CD8-positive, alpha-beta memory T cell (primary cell): ENCODE measurements at regions of chr9 and their contacts with region 1.

Region 1: GRCh38 chr9:104863180-104863883 is 64.6 kb downstream of the ABCA1 start:
- DNase-seq: peak; percentile 5 to 58 (median 36)
- H3K4me3 ChIP-seq: no peak overlapping the region
- H3K4me3 Mint-ChIP-seq: no peak overlapping the region
- H3K27ac ChIP-seq: no peak overlapping the region
- H3K27ac Mint-ChIP-seq: peak overlapping the region in 1 of 8 donors; percentile 0
- H3K4me1 ChIP-seq: peaks cover 5% of the 10 kb centered on the region
- H3K4me1 Mint-ChIP-seq: no peaks in the 10 kb centered on the region
- H3K27me3 ChIP-seq: no peaks in the 10 kb centered on the region
- H3K27me3 Mint-ChIP-seq: peaks cover 2 to 11% of the 10 kb centered on the region in 2 donors

Region 2: DNA sequence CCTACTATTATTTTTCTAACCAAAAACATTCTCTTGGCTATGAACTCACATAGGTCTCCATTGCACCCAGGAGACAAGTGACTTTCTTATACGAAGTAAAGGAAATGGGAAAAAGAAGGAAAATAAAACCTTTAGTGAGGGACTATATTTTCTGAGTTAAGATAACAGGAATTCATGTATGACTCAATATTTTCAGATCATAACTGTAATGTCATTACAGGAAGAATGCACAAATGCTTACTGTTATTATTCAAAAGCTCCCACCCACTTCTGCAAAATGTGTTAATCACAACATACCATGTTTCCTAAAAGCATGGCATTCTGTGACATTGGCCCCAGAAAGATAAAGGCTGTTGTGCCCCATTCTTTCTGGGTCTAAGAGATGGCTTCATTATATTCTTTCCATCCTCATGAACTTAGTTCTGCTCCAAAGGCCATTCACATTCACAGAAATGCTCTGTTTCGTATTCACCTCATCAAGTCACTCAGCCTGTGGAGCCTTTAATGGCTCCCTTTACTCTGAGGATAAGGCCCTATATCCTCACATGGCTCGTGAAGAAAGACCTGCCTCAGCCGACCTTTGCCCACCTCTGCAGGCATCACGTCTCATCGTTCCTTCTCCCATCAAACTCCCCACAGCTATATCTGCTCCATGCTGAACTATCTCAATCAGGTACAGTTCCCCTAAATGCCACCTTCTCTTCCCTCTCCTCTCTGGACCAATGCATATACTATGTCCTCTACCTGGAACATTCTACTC is 12.4 kb before region 1 on chr9:
- CTCF ChIA-PET with region 1: no interaction called
- POLR2A ChIA-PET with region 1: no interaction called
- DNase-seq: no peak
- H3K4me3 ChIP-seq: no peak overlapping the region
- H3K4me3 Mint-ChIP-seq: no peak overlapping the region
- H3K27ac ChIP-seq: no peak overlapping the region
- H3K27ac Mint-ChIP-seq: peak overlapping the region in 1 of 8 donors; percentile 18
- H3K4me1 ChIP-seq: no peaks in the 10 kb centered on the region
- H3K4me1 Mint-ChIP-seq: no peaks in the 10 kb centered on the region
- H3K27me3 ChIP-seq: no peaks in the 10 kb centered on the region
- H3K27me3 Mint-ChIP-seq: peaks cover 3 to 12% of the 10 kb centered on the region in 2 donors

Region 3: DNA sequence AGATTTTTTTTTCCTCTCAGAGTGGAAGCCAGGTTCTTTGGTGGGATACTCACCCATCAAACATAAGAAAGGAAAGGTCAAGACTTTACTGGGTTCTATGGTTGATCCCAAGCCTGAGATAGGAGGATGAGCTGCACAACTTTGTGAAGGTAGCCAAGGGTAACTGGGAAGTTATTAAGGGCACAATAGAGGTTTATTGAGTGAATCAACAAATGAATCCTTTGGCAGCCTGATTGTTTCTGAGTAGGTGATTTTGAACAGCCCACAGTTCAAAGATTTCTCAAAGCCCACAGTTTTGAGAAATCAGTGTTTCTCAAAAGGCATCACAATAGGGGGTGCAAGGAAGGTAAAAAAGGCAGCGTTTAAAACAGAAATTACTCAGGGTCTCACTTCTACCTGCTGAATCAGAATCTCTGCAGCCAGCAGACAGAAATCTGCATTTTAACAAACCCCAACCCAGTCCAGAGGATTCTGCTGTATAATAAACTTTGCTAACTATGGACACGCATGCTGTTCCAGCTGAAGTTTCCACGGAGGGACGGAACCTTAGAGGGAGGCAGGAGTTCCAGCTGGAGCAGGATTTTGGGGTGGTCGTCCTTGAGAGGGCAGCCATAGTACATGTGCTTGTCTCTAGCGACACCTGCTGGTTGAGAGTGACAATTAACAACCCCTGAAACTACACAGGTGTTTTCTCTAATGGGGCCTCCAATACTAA is 551.8 kb after region 1 on chr9:
- CTCF ChIA-PET with region 1: interaction called, 28 read pairs
- POLR2A ChIA-PET with region 1: no interaction called
- DNase-seq: peak; percentile 33 to 69 (median 50)
- H3K4me3 ChIP-seq: no peak overlapping the region
- H3K4me3 Mint-ChIP-seq: no peak overlapping the region
- H3K27ac ChIP-seq: no peak overlapping the region
- H3K27ac Mint-ChIP-seq: no peak overlapping the region
- H3K4me1 ChIP-seq: peaks cover 4% of the 10 kb centered on the region
- H3K4me1 Mint-ChIP-seq: no peaks in the 10 kb centered on the region
- H3K27me3 ChIP-seq: peaks cover 7% of the 10 kb centered on the region
- H3K27me3 Mint-ChIP-seq: peaks cover 23 to 44% of the 10 kb centered on the region in 2 donors